ENCODE measurements at regions of chr4 and their contacts with region 1.

Region 1: GRCh38 chr4:159160242-159160641 is 57.4 kb downstream of the RAPGEF2 start:
- DNase-seq: no peak
- CTCF ChIP-seq: no peak

Region 2: GRCh38 chr4:159175085-159175988 is 15.1 kb after region 1 on chr4:
- CTCF ChIA-PET with region 1: interaction called, 16 read pairs
- POLR2A ChIA-PET with region 1: no interaction called
- DNase-seq: peak; percentile 29
- CTCF ChIP-seq: peak; percentile 71

Region 3: DNA sequence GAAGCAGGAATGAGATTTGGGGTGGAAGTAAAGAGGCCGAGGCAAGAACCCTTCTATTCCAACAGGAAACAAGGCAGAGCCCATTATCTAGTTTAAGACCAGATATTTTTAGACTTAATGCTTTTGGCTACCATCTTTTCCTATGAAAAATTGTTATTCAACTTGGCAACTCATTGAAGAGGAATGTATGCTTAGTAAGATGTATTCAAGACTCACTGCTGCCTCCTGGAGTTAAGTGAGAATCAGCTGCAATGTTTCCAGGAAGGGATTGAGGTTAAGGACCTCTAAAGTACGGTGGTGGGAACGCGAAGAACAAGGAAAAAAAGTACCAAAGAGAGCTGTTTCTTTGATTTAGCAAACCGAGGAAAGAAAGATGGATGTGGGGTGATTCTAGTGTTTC is 31.7 kb after region 1 on chr4:
- CTCF ChIA-PET with region 1: no interaction called
- POLR2A ChIA-PET with region 1: no interaction called
- DNase-seq: no peak
- CTCF ChIP-seq: peak; percentile 29

Measured in GM10248 (cell line).